ENCODE measurements at regions of chr3 and their contacts with region 1.

Region 1: DNA sequence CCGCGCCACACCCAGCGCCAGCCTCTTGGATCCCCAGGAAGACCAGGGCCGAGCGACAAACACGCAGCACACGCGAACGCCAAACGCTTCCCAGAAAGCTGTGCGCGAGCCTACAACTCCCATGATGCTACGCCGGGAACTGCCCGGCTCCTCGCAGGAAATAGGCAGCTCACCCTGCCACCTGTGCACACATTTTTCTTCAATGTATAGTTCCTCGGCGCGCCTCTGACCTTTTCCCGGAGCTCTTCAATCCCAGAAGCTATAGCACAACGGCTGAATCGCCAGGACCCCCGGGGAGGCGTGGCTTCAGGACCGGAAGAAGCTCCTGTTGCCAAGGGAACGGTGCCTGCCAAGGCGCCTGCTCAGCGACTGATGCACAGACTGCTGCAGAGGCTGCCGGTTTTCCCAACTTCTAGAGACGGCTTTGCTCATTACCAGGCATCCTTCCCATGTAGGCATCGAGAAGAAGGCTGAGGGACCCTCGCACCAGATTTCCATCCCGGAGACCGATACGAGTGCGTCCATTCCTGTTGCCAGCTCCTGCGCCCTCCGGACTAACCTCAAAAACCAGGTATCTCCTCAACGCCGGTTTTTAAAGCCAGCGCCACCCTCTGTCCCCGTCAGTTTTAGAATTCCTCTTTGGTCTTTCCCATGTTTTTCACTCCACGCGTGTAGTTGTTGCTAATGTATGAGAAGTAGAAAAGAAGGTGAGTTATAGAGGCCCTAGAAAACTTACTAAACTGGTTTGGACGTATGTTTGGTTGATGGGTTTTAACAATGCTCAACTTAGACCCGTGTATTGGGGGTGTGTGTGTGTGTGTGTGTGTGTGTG is at the start of gene ARL6:
- DNase-seq: peak; percentile 92
- total RNA-seq, gene ARL6: 3.5 TPM

Region 2: GRCh38 chr3:96466441-96466840 is 1298.2 kb before region 1 on chr3:
- intact Hi-C with region 1: no loop called
- DNase-seq: no peak

Region 3: GRCh38 chr3:97821810-97822775 is 57.5 kb after region 1 on chr3 and contains the start of gene CRYBG3:
- intact Hi-C with region 1: loop called (anchors 5 kb)
- DNase-seq: peak; percentile 93
- total RNA-seq, gene CRYBG3: 38.2 TPM

Region 4: DNA sequence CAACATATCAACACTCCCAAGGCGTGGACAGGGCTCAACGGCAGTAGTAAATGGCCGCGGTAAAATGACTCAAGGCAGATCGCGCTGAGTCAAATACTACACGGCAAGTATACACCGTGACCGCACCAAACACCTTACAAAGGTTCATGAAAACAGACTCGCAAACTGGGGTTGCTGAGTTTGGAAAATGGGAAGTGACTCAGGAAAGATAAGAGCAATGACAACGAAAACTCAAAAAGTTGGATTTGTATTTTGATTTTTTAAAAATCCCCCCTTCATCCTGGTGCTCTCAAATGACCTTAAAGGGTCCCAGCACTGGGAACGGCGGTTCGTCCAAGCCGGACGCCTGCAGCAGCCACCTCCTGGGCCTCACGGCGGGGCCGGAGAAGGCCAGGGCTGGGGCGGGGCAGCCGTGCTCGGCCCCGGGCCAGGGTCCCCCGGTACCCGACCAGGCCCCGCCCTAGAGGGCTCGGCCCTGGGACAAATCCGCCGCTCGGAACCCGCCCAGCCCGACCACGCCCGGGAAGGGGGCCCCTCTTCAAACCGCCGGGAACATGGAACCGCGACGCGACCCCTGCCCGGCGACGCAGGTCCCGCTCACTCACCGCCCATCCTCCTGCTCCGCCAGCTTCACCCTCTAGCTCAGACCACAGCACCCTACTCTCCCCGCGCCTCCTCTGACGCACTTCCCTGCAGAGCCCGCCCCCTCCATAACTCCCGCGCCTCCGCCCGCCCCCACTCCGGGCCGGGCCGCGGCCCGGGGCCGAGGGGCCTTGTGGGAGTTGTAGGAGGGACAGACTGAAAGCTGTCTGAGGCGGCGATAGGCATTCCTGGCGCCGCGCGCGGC is 757.8 kb after region 1 on chr3 and contains the start of gene CLDND1:
- intact Hi-C with region 1: loop called (anchors 10 kb)
- DNase-seq: peak; percentile 99
- total RNA-seq, gene CLDND1: 80.8 TPM

Region 5: DNA sequence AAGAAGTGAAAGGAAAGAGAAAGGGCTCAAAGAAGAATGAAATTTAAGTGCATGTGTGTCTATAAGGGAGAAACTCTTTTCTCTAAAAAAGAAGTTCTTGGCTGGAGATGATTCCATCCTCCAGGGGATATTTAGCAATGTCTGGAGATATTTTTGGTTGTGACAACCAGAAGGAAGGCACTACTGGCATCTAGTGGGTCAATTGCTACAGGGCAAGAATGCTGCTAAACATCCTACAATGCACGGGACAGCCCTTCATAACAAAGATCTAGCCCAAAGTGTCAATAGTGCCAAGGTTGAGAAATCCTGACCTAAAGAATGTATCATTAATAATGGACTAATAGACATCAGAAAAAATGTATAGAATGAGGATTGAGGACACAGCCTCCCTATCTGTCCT is 941.1 kb after region 1 on chr3:
- intact Hi-C with region 1: no loop called
- DNase-seq: no peak